Esophagus squamous epithelium (tissue), 5 donors: ENCODE measurements at regions of chr15 and their contacts with region 1.

Region 1: GRCh38 chr15:65856821-65857455 is 12.4 kb upstream of the RAB11A start:
- DNase-seq: no peak
- H3K4me3 ChIP-seq: no peak overlapping the region
- H3K27ac ChIP-seq: no peak overlapping the region
- H3K4me1 ChIP-seq: no peaks in the 10 kb centered on the region
- H3K27me3 ChIP-seq: no peaks in the 10 kb centered on the region
- CTCF ChIP-seq: peak; percentile 71 to 87 (median 78)
- POLR2A ChIP-seq: no peak

Region 2: DNA sequence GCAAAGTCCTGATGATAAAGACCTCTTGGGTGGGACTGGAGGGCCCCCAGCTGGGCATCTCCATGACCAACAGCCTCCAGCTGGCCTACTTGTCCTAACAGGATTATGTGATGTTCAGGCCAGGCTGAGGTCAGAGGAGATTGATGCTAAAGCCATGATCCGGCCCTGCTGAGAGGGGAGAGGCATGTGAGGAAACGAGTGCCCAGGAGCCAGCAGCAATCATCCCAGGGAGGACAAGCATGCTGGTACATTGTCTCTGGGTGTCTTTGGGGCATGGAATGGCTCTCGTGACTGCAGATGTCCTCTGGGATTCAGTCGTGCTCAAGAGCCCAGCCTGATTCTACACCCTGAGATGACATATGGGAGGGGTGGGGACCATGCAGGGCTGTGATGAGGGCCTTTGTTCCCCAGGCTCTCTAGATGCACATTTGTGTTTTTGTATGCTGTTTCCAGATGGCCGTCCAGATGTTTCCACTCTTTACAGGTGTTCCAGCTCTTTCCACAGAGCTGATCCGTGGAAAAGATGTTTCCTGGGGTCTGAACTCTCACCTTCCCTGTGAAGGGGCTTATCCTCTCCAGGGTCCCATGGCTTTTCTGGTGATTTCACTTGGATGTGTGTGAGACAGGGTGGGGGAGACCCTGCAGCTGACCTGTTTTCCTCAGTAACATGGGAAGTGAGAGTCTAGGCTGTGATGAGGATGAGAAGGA is 215.0 kb before region 1 on chr15:
- intact Hi-C with region 1: loop called (anchors 5 kb)
- DNase-seq: no peak
- H3K4me3 ChIP-seq: no peak overlapping the region
- H3K27ac ChIP-seq: peak overlapping the region in 2 of 4 donors; percentile 29 to 34
- H3K4me1 ChIP-seq: peaks cover 0 to 11% (median 0%) of the 10 kb centered on the region in 3 donors
- H3K27me3 ChIP-seq: no peaks in the 10 kb centered on the region
- CTCF ChIP-seq: no peak
- POLR2A ChIP-seq: no peak

Region 3: DNA sequence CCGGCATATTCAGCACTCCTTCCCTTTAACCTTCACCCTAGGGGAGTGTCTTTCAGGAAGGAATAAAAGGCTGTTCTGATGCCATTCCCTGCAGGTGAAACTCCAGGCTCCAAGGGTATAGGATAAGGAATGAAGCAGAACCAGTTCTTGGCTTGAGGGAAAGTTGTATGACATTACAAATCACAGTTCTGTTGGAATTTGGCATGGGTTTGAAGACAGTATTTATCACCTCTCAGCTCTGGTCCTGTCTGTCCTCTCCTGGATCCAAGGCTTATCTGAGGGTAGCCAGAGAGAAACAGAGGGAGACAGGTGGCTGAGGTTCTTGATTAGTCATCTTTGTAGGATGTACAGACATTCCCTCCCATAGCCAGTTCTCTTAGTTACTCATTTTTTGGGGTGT is 49.5 kb after region 1 on chr15:
- intact Hi-C with region 1: no loop called
- DNase-seq: no peak
- H3K4me3 ChIP-seq: no peak overlapping the region
- H3K27ac ChIP-seq: peak overlapping the region; percentile 12 to 69 (median 37)
- H3K4me1 ChIP-seq: peaks cover 14 to 49% (median 15%) of the 10 kb centered on the region in 3 donors
- H3K27me3 ChIP-seq: no peaks in the 10 kb centered on the region
- CTCF ChIP-seq: no peak
- POLR2A ChIP-seq: no peak